Ascending aorta (tissue), 2 donors: ENCODE measurements at regions of chr19 and their contacts with region 1.

Region 1: GRCh38 chr19:36152352-36153091 is at the start of gene COX7A1:
- DNase-seq: peak; percentile 59 to 85
- H3K4me3 ChIP-seq: peak within 1 kb of the TSS; percentile 74 to 96
- H3K27ac ChIP-seq: peak within 1 kb of the TSS; percentile 99 to 100
- H3K4me1 ChIP-seq: peaks cover 4 to 17% of the 10 kb centered on the region in 2 donors
- H3K27me3 ChIP-seq: no peaks in the 10 kb centered on the region
- CTCF ChIP-seq: no peak
- total RNA-seq, gene COX7A1: 51.2 TPM

Region 2: GRCh38 chr19:36139473-36140303 is 12.8 kb before region 1 on chr19 and contains the start of gene CAPNS1:
- intact Hi-C with region 1: loop called (anchors 1 kb)
- DNase-seq: peak; percentile 85 to 99
- H3K4me3 ChIP-seq: peak within 1 kb of the TSS; percentile 80 to 82
- H3K27ac ChIP-seq: peak within 1 kb of the TSS; percentile 96 to 97
- H3K4me1 ChIP-seq: peaks cover 6 to 19% of the 10 kb centered on the region in 2 donors
- H3K27me3 ChIP-seq: no peaks in the 10 kb centered on the region
- CTCF ChIP-seq: peak in 1 of 3 experiments; percentile 11
- total RNA-seq, gene CAPNS1: 168 TPM

Region 3: DNA sequence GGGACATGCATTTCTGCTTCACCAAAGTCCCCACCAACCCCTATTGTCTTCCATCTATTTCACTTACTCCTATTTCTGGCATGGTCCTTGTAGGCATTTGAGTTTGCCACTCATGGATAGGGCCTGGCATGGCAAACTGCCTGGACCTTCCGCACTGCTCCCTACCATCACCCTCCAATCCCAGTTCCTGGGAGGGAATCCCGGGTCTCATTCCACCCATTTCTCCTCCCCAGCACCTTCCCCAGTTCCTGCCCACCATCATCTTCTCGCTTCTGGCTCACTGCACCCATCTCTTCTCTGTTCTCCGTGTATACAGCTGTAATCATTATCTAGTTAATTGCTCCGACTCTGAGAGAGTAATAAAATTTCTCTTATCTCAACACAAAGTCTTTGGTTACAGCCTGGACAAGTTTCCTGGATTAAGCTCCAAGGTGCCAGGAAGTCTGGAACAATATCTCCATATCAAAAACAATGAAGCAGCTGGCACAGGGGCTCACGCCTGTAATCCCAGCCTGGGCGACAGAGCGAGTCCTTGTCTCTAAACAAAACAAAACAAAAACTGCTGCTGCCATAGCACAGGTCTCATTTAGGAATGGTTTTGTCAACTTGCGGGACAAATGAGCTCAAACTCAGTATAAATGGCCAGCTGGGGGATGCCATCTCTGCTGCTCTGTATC is 16.7 kb after region 1 on chr19:
- intact Hi-C with region 1: loop called (anchors 1 kb)
- DNase-seq: no peak
- H3K4me3 ChIP-seq: peak overlapping the region in 1 of 2 donors; percentile 28
- H3K27ac ChIP-seq: peak overlapping the region; percentile 71 to 85
- H3K4me1 ChIP-seq: no peaks in the 10 kb centered on the region
- H3K27me3 ChIP-seq: no peaks in the 10 kb centered on the region
- CTCF ChIP-seq: no peak

Region 4: GRCh38 chr19:36198119-36198518 is 45.6 kb after region 1 on chr19:
- intact Hi-C with region 1: no loop called
- DNase-seq: no peak
- H3K4me3 ChIP-seq: no peak overlapping the region
- H3K27ac ChIP-seq: no peak overlapping the region
- H3K4me1 ChIP-seq: no peaks in the 10 kb centered on the region
- H3K27me3 ChIP-seq: no peaks in the 10 kb centered on the region
- CTCF ChIP-seq: no peak